ENCODE measurements at regions of chr10 and their contacts with region 1.

Region 1: GRCh38 chr10:97618733-97619132 is 14.6 kb downstream of the MORN4 start:
- DNase-seq: no peak
- H3K4me3 ChIP-seq: no peak overlapping the region
- H3K27ac ChIP-seq: no peak overlapping the region
- H3K4me1 ChIP-seq: no peaks in the 10 kb centered on the region
- H3K27me3 ChIP-seq: no peaks in the 10 kb centered on the region
- CTCF ChIP-seq: no peak

Region 2: DNA sequence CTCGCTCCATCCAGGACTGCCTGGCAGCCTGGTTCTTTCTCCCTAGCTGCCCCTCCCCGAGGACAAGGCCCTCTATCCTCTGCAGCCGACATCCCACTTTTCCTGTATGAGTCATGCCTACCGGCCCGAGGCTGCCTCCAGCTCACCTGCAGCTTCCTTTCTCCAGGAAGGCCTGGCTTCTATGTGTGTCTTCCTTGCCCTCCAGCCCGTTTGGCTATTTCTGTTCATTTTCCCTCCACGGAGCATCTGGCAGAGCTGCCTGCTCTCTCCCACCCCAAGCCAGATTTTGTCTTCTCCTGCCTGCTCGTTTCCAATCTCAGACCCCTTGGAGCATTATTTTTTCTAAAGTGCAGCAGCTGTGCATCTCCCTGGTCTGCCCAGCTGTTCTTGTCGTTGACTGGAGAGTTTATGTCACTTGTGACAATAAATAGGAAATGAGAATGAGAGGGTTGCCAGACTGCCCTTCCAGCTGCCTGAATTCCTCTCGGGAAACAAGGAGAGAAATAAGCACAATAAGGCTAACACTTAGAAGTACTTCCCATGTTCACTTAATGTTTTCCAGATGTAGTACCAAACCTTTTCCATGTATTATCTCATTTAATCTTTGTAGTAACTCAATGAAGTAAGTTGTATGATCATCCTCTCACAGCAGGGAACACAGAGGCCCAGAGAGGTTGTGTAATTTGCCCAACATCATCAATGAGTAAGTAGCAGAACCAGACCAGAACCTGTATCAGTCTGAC is 100.3 kb before region 1 on chr10:
- CTCF ChIA-PET with region 1: interaction called, 16 read pairs
- POLR2A ChIA-PET with region 1: no interaction called
- intact Hi-C with region 1: no loop called
- DNase-seq: peak; percentile 65 to 67
- H3K4me3 ChIP-seq: no peak overlapping the region
- H3K27ac ChIP-seq: no peak overlapping the region
- H3K4me1 ChIP-seq: peaks cover 34% of the 10 kb centered on the region
- H3K27me3 ChIP-seq: no peaks in the 10 kb centered on the region
- CTCF ChIP-seq: no peak

Region 3: DNA sequence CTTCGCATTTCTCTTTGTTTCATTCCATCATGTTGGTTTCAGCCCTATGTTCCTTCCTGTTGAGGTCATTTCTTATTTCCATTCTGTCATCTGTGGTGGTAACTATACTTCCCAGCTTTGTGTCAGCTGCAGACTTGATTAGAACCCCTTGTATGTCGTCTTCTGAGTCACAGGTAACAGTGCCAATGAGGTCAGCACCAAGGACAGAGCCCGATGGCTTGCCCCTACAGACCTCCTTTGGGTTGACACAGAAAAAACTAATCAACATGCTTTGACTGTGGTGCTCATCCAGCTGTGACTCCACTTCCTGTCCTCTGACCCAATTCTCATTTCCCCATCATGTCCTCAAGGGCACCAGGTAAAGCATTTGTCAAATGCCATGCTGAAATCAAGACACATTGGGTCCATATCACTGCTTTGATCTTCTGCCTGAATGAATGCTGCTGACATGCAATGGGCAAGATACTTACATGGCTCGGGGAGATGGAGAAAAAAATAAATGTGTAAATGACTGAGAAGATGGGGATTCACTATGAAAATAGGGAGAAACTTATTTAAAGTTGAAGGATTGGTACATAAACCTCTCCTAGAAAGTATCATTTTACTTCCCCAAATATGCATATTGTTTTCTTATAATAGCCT is 437.3 kb after region 1 on chr10:
- CTCF ChIA-PET with region 1: no interaction called
- POLR2A ChIA-PET with region 1: no interaction called
- intact Hi-C with region 1: no loop called
- DNase-seq: no peak
- H3K4me3 ChIP-seq: no peak overlapping the region
- H3K27ac ChIP-seq: no peak overlapping the region
- H3K4me1 ChIP-seq: no peaks in the 10 kb centered on the region
- H3K27me3 ChIP-seq: peaks cover 17% of the 10 kb centered on the region; the same call in 1 of the 2 replicates
- CTCF ChIP-seq: no peak